Ovary (tissue), 10 donors: ENCODE measurements at regions of chr12 and their contacts with region 1.

Region 1: GRCh38 chr12:93868771-93869170 is 191.6 kb downstream of the CRADD start:
- DNase-seq: no peak
- H3K4me3 ChIP-seq: no peak overlapping the region
- H3K27ac ChIP-seq: no peak overlapping the region
- H3K4me1 ChIP-seq: no peaks in the 10 kb centered on the region
- H3K27me3 ChIP-seq: no peaks in the 10 kb centered on the region
- CTCF ChIP-seq: no peak
- EP300 ChIP-seq: no peak
- POLR2A ChIP-seq: no peak

Region 2: GRCh38 chr12:92802906-92803305 is 1065.9 kb before region 1 on chr12:
- intact Hi-C with region 1: loop called in 1 of 4 experiments (anchors 5 kb)
- DNase-seq: no peak
- H3K4me3 ChIP-seq: no peak overlapping the region
- H3K27ac ChIP-seq: no peak overlapping the region
- H3K4me1 ChIP-seq: no peaks in the 10 kb centered on the region
- H3K27me3 ChIP-seq: no peaks in the 10 kb centered on the region
- CTCF ChIP-seq: no peak
- EP300 ChIP-seq: no peak
- POLR2A ChIP-seq: no peak

Region 3: GRCh38 chr12:93918262-93918661 is 49.5 kb after region 1 on chr12:
- intact Hi-C with region 1: no loop called
- DNase-seq: no peak
- H3K4me3 ChIP-seq: no peak overlapping the region
- H3K27ac ChIP-seq: no peak overlapping the region
- H3K4me1 ChIP-seq: no peaks in the 10 kb centered on the region
- H3K27me3 ChIP-seq: no peaks in the 10 kb centered on the region
- CTCF ChIP-seq: no peak
- EP300 ChIP-seq: peak; percentile 31
- POLR2A ChIP-seq: no peak